Posterior vena cava (tissue), 2 donors: ENCODE measurements at regions of chr19 and their contacts with region 1.

Region 1: DNA sequence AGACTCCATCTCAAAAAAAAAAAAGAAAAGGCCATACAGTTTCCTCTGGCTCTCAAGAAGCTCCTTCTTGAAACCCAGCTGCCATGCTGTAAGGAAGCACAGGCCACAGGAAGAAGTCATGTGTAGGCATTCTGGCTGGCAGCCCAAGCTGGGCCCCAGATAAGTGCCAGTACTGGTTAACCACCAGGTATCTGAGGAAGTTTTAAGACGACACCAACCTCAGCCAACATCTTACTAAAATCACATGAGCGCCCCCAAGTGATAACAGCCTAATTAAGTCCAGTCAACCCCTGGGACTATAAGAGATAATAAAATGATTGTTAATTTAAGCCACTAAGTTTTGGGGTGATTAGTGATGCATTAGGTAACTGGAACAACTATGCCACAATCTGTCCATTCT is 27.4 kb upstream of the AKT2 start:
- DNase-seq: peak; percentile 26

Region 2: DNA sequence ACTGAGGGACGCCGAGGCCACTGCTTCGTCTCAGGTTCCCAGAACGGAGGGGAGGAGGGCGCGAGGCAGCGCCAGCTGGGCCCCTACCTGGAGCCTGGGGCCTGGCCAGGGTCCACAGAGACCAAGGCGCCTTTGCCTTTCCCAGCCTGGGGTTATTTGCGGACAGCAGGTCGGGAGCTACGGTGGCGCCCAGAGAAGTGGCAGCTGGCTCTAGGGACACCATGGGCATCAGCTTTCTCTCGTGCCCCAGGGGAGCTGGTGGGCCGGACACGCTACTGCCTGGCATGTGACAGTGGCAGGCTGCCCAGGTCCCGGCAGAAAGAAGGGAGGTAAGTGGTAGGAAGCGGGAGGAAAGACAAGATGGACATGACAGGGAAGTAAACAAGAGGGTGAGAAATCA is 46.4 kb before region 1 on chr19:
- intact Hi-C with region 1: no loop called
- DNase-seq: no peak

Region 3: DNA sequence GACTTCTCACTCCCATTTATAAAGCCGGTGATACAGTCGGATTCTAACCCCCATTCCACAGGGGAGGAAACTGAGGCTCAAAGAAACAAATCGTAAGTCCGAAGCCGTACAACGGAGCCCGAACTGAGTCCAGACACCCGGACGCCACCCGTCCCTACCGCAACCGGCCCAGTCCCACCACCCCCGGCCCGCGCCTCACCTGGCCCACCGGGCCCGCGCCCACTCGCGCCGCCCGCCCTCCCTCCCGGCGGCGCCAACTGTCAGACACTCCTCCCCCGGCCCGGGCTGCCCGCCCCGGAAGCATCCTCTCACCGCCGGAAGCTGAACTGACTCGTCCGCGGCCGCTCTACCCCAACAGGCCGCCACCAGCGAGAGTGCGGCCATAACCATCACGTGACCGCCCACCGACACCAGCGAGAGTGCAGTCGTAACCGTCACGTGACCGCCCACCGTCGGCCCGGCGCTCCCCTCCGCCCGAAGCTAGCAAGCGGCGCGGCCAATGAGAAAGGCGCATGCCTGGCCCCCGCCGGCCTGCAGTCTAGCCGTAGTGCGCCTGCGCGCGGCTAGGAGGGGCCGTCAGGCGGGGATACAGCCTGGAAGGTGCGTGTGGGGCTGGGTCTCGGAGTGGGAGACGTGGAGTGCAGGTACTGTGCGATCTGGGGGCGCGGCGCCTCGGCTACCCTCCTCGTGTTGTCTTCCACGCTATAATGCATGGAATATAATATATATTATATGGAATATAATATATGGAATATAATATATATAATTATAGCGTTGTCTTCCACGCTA is 35.8 kb after region 1 on chr19 and contains the starts of genes C19orf47 and PLD3:
- intact Hi-C with region 1: no loop called
- DNase-seq: peak; percentile 100
- total RNA-seq, gene C19orf47: 13.2 to 16.9 TPM
- total RNA-seq, gene PLD3: 153 to 281 TPM

Region 4: GRCh38 chr19:40623403-40624251 is 311.1 kb after region 1 on chr19:
- intact Hi-C with region 1: loop called in 1 of 2 experiments (anchors 10 kb)
- DNase-seq: peak; percentile 89